Dorsolateral prefrontal cortex (tissue), 120 donors: ENCODE measurements at regions of chr1 and their contacts with region 1.

Region 1: GRCh38 chr1:5364591-5364990 is 627.6 kb downstream of the NPHP4 start:
- DNase-seq: no peak
- H3K4me3 ChIP-seq: no peak overlapping the region
- H3K27ac ChIP-seq: no peak overlapping the region
- H3K27me3 ChIP-seq: peaks cover 0 to 42% (median 6%) of the 10 kb centered on the region in 45 donors
- CTCF ChIP-seq: no peak

Region 2: GRCh38 chr1:5404412-5405203 is 40.0 kb after region 1 on chr1:
- intact Hi-C with region 1: loop called in 1 of 2 experiments (anchors 1 kb)
- DNase-seq: no peak
- H3K4me3 ChIP-seq: no peak overlapping the region
- H3K27ac ChIP-seq: no peak overlapping the region
- H3K27me3 ChIP-seq: no peaks in the 10 kb centered on the region
- CTCF ChIP-seq: no peak

Region 3: DNA sequence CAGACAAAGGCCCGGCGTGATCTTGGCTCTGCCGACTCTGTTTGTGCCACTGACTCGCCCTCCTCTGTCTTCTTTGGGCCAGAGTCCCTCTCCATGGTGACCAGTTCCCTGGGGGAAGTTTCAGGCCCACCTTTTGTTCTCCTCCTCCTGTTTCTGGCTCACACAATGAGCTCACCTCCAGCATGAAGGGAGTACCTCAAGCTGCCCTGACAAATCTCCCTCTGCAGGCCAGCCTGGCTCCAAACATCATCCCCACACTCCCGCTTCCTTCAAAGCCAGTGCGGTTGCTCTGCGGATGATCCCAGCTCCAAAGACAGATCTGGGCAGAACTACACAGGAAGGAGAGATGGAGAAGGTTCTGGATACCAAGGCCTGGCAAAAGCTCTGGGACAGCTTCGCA is 51.0 kb after region 1 on chr1:
- intact Hi-C with region 1: no loop called
- DNase-seq: no peak
- H3K4me3 ChIP-seq: no peak overlapping the region
- H3K27ac ChIP-seq: no peak overlapping the region
- H3K27me3 ChIP-seq: peaks cover 0 to 2% (median 0%) of the 10 kb centered on the region in 45 donors
- CTCF ChIP-seq: no peak